A549 (cell line): ENCODE measurements at regions of chr5 and their contacts with region 1.

Region 1: GRCh38 chr5:134465816-134466240 is 54.1 kb upstream of the CDKN2AIPNL start:
- DNase-seq: peak; percentile 89 to 92
- ATAC-seq: peak; percentile 80 to 84
- H3K4me3 ChIP-seq: peak overlapping the region; percentile 72
- H3K27ac ChIP-seq: peak overlapping the region; percentile 99 to 100
- H3K4me1 ChIP-seq: peaks cover 26% of the 10 kb centered on the region
- CTCF ChIP-seq: no peak
- EP300 ChIP-seq: no peak
- POLR2A ChIP-seq: peak; percentile 85
- RAD21 ChIP-seq: peak in 1 of 2 experiments; percentile 6; a peak in 2 of 5 replicates

Region 2: DNA sequence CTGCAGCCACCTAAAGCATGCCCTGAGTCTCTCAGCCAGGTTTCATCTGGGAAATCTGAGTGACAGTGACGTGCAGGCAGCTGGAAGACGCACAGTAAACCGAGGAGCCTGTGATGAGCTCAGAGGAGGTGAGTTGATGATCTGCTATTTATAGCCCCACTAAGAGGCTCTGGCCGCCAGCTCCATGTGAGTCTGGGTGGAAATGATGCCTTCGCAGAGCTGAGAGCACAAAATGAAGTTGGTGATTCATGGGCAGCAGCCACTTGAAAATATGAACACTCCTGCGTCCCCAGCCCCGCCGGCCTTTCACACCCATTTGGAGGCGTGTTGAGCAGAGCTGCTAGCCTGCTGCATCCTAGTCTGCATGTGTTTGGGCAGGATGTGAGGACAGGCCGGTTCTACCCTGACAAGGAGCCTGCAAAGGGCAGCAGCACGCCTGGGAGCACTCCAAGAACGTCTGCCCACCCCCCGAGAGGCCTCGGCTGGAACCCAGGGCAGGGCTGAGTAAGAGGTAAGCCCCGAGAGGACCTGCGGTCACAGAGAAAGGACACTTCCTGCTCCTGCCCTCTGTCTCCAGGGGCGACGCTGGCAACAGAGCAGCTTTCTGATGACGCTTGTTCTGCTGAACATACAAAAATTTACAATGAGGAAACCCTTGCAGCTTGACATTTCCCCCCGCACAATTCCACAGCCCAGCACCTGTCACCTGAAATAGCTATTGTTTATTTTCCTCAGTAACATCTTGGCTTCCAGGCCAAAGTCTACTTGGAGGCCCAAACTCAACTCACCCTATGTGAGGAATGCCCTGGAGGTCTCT is 29.1 kb before region 1 on chr5:
- CTCF ChIA-PET with region 1: interaction called, 5 read pairs
- POLR2A ChIA-PET with region 1: interaction called, 29 read pairs
- DNase-seq: peak; percentile 41 to 75
- ATAC-seq: peak; percentile 81
- H3K4me3 ChIP-seq: no peak overlapping the region
- H3K27ac ChIP-seq: peak overlapping the region; percentile 55 to 89
- H3K4me1 ChIP-seq: peaks cover 53% of the 10 kb centered on the region
- CTCF ChIP-seq: no peak
- EP300 ChIP-seq: no peak
- POLR2A ChIP-seq: no peak
- RAD21 ChIP-seq: no peak

Region 3: DNA sequence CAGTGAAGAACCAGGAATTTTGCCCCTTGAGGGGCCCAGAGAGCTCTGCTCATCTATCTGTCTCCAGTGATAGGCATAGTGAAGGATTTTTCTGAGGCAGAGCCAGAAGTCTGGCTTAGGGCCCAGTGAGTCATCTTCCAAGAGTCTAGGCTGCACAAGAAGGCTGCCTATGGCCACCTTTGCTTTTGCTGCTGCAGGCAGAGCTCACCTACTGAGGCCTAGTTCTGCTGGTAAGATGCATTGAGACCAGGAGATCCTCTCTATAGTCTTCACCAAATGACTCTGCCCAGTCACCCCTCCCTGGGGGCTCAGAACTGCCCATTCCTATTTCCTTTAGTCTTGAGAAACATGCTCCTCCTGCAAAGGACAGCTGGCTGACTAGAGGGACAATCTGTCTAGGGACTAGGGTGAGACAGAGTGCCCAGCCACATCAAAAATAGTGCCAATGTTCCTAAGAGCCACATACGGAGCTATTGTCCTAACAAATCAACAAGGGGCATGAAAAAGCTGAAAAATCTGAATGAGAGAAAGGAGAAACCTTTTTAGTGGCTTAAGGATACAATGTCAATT is 13.8 kb before region 1 on chr5:
- CTCF ChIA-PET with region 1: interaction called, 12 read pairs
- POLR2A ChIA-PET with region 1: interaction called, 20 read pairs
- DNase-seq: peak; percentile 58 to 90
- ATAC-seq: peak; percentile 92 to 97
- H3K4me3 ChIP-seq: no peak overlapping the region
- H3K27ac ChIP-seq: peak overlapping the region; percentile 43 to 73; a peak in 5 of 6 replicates
- H3K4me1 ChIP-seq: peaks cover 24% of the 10 kb centered on the region
- CTCF ChIP-seq: no peak
- EP300 ChIP-seq: no peak
- POLR2A ChIP-seq: no peak
- RAD21 ChIP-seq: peak in 1 of 2 experiments; percentile 12; a peak in 1 of 5 replicates

Region 4: GRCh38 chr5:134503088-134503946 is 37.5 kb after region 1 on chr5:
- CTCF ChIA-PET with region 1: interaction called, 9 read pairs
- POLR2A ChIA-PET with region 1: interaction called, 53 read pairs
- DNase-seq: peak; percentile 80 to 92
- ATAC-seq: peak; percentile 60 to 73
- H3K4me3 ChIP-seq: no peak overlapping the region
- H3K27ac ChIP-seq: peak overlapping the region; percentile 93 to 94
- H3K4me1 ChIP-seq: peaks cover 59% of the 10 kb centered on the region
- CTCF ChIP-seq: no peak
- EP300 ChIP-seq: 0 out of 5 replicates have a peak, but pooled peaks of 1 of the 2 experiments have one; percentile 26
- POLR2A ChIP-seq: peak; percentile 15; the same call in 1 of the 2 replicates
- RAD21 ChIP-seq: peak; percentile 35 to 36; a peak in 3 of 5 replicates

Region 5: GRCh38 chr5:134511788-134512650 is 46.2 kb after region 1 on chr5:
- CTCF ChIA-PET with region 1: interaction called, 23 read pairs
- POLR2A ChIA-PET with region 1: interaction called, 53 read pairs
- DNase-seq: peak in 1 of 2 experiments; percentile 82
- ATAC-seq: peak; percentile 62 to 72
- H3K4me3 ChIP-seq: no peak overlapping the region
- H3K27ac ChIP-seq: peak overlapping the region; percentile 93 to 94
- H3K4me1 ChIP-seq: peaks cover 68% of the 10 kb centered on the region
- CTCF ChIP-seq: peak; percentile 45
- EP300 ChIP-seq: no peak
- POLR2A ChIP-seq: no peak
- RAD21 ChIP-seq: peak; percentile 61 to 69